Endothelial cell of umbilical vein (primary cell): ENCODE measurements at regions of chr1 and their contacts with region 1.

Region 1: DNA sequence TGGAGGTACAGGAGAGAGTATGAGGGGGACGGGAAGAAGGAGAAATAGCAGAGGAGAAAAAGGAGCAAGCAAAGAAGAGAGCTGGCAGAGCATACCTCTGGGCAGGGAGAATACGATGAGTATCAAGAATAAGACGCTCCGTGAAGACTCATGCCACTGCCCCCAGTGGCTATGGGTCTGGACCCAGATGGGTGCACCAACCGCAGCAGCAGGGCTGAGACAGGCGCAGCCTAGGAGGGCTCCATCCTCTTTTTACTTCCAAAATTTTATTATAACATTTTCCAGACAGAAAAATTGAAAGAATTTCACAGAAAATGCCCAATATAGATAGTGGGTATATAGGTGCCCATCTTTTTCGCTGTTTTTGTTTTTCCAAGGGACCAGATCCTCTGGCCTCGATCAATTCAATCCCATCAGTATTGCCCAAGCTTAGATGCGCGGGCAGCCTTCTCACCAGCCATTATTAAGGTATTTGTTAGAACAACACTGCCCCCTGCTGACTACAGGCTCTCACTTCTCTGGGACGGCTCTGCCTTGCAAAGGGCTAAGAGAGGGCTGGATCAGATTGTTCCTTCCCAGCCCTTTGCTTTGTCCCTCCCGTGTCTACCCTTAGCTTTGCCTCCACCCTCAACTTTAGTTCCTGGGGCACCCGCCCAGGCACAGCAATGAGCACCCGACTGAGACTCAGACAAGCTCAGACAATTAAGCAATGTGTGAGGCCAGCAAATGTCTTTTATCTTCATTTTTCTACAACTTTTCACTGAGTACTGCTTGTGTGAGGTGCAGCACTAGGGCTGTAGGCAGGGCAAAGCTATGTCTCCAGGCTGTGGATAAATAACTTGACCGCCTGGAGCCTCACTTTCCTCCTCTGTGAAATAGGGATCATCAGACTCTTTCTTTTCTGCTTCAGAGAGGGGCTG is 17.5 kb upstream of the CAMK1G start:
- DNase-seq: peak; percentile 62
- H3K4me3 ChIP-seq: no peak overlapping the region
- H3K27ac ChIP-seq: no peak overlapping the region
- H3K4me1 ChIP-seq: no peaks in the 10 kb centered on the region
- H3K27me3 ChIP-seq: peaks cover 12 to 17% of the 10 kb centered on the region in 2 experiments
- CTCF ChIP-seq: peak; percentile 70 to 81
- POLR2A ChIP-seq: no peak

Region 2: DNA sequence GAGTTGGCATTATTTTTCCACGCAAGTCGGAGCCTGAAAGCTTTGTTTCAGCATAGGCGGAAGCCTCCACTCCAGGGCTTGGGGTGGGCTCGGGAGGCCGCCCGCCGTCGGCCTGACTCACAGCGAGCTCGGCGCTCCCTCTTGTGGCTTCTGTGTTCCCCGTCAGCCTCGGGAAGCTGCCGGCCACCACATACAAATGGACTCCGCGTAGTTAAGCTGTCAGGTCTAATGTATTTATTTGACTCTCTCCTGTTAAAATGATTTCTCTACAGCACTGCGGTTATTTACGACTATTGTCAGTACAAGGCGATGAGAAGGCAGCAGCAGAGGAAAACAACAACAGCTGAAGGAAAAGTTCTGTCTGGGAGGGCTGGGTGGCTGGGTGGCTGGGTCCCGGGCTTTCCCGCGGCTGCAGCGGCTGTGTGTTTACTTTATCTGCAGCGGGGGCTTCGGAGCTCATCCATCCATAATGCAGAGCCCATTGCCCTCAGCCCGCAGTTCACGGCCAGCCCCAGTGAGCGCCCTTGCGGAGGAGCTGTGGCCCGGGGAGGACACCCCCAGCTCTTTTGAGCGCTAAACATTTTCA is 358.2 kb before region 1 on chr1:
- CTCF ChIA-PET with region 1: interaction called, 16 read pairs
- POLR2A ChIA-PET with region 1: interaction called, 3 read pairs
- dilution Hi-C with region 1: no loop called
- intact Hi-C with region 1: loop called (anchors 1 kb)
- DNase-seq: peak; percentile 73
- H3K4me3 ChIP-seq: no peak overlapping the region
- H3K27ac ChIP-seq: no peak overlapping the region
- H3K4me1 ChIP-seq: no peaks in the 10 kb centered on the region
- H3K27me3 ChIP-seq: peaks cover 16 to 23% of the 10 kb centered on the region in 2 experiments
- CTCF ChIP-seq: peak; percentile 77 to 87
- POLR2A ChIP-seq: no peak

Region 3: DNA sequence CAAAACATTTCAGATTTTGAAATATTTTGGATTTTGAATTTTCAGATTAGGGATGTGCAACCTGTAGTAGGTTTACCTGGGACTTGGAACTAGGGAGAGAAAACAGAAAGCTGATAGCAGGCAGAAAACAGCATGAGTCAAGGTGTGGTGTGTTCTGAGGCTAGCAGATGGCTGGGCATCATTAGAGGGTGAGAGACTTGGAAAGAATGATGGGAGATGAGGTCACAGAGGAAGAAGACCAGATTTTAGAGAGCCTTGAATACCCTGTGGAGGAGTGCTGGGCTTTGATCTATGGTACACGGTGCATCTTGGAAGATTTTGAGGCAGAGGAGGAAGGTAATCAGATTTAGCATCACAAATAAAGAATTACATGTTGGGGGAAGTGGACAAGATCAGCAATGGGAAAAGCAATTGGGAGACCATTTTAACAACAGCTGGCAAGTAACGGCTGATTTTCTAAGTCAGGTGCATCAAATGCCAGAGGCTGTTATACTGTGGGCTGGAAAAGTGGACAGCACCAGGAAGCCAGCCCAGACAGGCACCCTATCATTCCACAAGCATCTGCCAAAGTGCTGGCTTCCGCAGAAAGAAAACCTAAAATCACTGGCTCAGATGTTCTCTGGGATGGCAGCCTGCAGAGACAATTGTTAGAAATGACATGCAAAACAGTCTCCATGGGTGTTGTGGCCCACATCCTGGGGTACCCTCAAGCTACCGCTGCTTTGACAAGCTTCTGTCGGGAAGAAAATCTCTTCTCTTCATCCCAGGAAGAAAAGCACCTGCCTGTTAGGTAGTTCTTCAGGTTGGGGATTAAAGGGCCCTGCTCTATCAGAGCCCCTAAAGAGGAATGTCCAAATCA is 13.4 kb before region 1 on chr1:
- CTCF ChIA-PET with region 1: interaction called, 12 read pairs
- POLR2A ChIA-PET with region 1: no interaction called
- dilution Hi-C with region 1: no loop called
- intact Hi-C with region 1: no loop called
- DNase-seq: no peak
- H3K4me3 ChIP-seq: no peak overlapping the region
- H3K27ac ChIP-seq: no peak overlapping the region
- H3K4me1 ChIP-seq: no peaks in the 10 kb centered on the region
- H3K27me3 ChIP-seq: peaks cover 2 to 5% of the 10 kb centered on the region in 2 experiments
- CTCF ChIP-seq: no peak
- POLR2A ChIP-seq: no peak

Region 4: DNA sequence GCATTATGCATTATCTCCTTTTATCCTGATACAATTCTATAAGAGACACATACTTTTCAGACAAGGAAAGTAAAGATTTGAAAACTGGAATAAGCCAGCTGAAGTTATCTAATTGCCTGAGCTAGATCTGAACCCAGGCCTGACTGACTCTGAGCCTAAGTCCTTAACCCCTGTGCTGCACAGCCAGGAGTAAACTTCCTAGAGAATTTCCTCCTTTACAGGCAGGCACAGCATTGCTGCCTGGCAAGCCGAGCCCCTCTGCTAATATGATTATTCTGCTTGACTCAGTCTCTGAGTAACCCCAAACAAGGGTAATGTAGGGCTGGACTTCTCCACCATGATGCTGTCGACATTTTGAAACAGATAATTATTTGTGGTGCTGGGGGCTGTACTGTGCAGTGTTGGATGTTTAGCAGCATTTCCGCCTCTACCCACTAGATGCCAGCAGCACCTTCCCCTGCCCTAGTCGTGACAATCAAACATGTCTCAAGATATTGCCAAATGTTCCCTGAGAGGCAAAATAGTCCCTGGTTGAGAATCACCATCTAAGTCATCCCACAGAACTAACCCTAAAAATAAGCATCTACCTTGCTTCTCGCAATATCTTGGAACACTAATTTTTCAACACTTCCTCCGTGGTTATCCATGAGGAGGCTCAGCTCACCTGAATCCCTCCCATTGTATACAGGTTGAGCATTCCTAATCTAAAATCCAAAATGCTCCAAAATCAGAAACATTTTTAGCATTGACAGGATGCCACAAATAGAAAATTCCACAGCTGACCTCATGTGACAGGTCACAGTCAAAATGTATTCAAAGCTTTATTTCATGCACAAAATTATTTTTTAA is 36.0 kb after region 1 on chr1:
- CTCF ChIA-PET with region 1: interaction called, 10 read pairs
- POLR2A ChIA-PET with region 1: no interaction called
- dilution Hi-C with region 1: no loop called
- intact Hi-C with region 1: no loop called
- DNase-seq: peak; percentile 45
- H3K4me3 ChIP-seq: no peak overlapping the region
- H3K27ac ChIP-seq: no peak overlapping the region
- H3K4me1 ChIP-seq: peaks cover 5% of the 10 kb centered on the region
- H3K27me3 ChIP-seq: peaks cover 3 to 18% of the 10 kb centered on the region in 2 experiments
- CTCF ChIP-seq: peak; percentile 62 to 66
- POLR2A ChIP-seq: no peak

Region 5: GRCh38 chr1:209692745-209693504 is 126.9 kb after region 1 on chr1:
- CTCF ChIA-PET with region 1: interaction called, 70 read pairs
- POLR2A ChIA-PET with region 1: no interaction called
- dilution Hi-C with region 1: no loop called
- intact Hi-C with region 1: loop called (anchors 1 kb)
- DNase-seq: peak; percentile 79
- H3K4me3 ChIP-seq: no peak overlapping the region
- H3K27ac ChIP-seq: no peak overlapping the region
- H3K4me1 ChIP-seq: no peaks in the 10 kb centered on the region
- H3K27me3 ChIP-seq: peaks cover 9 to 13% of the 10 kb centered on the region in 2 experiments
- CTCF ChIP-seq: peak; percentile 66 to 80
- POLR2A ChIP-seq: no peak

Region 6: GRCh38 chr1:209747580-209748262 is 181.7 kb after region 1 on chr1:
- CTCF ChIA-PET with region 1: interaction called, 35 read pairs
- POLR2A ChIA-PET with region 1: no interaction called
- dilution Hi-C with region 1: no loop called
- intact Hi-C with region 1: loop called (anchors 1 kb)
- DNase-seq: peak; percentile 93
- H3K4me3 ChIP-seq: no peak overlapping the region
- H3K27ac ChIP-seq: no peak overlapping the region
- H3K4me1 ChIP-seq: no peaks in the 10 kb centered on the region
- H3K27me3 ChIP-seq: peaks cover 0 to 5% of the 10 kb centered on the region in 2 experiments
- CTCF ChIP-seq: peak; percentile 80 to 97
- POLR2A ChIP-seq: no peak

Region 7: DNA sequence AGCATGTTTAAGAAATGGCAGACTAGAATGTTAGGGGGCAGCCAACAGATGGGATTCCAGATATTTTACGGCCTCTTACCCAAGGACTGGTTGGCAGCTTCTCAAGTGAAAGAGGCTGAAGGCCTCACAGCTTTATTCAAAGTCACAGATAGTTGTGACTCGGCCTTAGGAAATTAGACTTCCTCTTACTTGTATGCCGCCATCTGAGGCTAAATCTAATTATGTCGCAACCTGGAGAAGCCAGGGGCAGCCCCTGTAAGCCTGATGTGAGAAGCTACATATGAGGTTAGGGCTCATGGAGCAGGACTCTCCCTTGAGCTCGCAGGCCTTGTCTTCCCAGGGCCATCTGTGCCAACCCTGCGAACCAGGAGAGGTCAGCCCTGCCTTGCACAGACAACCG is 1115.1 kb after region 1 on chr1:
- CTCF ChIA-PET with region 1: no interaction called
- POLR2A ChIA-PET with region 1: no interaction called
- dilution Hi-C with region 1: no loop called
- intact Hi-C with region 1: no loop called
- DNase-seq: no peak
- H3K4me3 ChIP-seq: no peak overlapping the region
- H3K27ac ChIP-seq: no peak overlapping the region
- H3K4me1 ChIP-seq: no peaks in the 10 kb centered on the region
- H3K27me3 ChIP-seq: no peaks in the 10 kb centered on the region
- CTCF ChIP-seq: no peak
- POLR2A ChIP-seq: no peak